ENCODE measurements at regions of chr10 and their contacts with region 1.

Region 1: DNA sequence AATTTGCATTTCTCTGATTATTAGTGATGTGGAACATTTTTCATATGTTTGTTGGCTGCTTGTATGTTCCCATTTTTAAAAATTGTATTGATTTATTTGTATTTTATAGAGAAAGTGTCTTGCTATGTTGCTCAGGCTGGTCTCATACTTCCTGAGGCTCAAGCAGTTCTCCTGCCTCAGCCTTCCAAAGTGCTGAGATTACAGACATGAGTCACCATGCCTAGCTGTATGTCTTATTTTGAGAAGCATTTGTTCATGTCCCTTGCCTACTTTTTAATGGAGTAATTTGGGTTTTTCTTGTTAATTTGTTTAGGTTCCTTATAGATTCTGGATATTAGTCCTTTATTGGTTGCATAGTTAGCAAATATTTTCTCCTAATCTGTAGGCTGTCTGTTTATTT is 214.2 kb upstream of the KAT6B start:
- DNase-seq: no peak

Region 2: GRCh38 chr10:73814896-73815718 is 797.1 kb before region 1 on chr10:
- intact Hi-C with region 1: no loop called
- DNase-seq: no peak

Region 3: GRCh38 chr10:74371696-74372095 is 240.5 kb before region 1 on chr10:
- intact Hi-C with region 1: no loop called
- DNase-seq: peak; percentile 41

Region 4: DNA sequence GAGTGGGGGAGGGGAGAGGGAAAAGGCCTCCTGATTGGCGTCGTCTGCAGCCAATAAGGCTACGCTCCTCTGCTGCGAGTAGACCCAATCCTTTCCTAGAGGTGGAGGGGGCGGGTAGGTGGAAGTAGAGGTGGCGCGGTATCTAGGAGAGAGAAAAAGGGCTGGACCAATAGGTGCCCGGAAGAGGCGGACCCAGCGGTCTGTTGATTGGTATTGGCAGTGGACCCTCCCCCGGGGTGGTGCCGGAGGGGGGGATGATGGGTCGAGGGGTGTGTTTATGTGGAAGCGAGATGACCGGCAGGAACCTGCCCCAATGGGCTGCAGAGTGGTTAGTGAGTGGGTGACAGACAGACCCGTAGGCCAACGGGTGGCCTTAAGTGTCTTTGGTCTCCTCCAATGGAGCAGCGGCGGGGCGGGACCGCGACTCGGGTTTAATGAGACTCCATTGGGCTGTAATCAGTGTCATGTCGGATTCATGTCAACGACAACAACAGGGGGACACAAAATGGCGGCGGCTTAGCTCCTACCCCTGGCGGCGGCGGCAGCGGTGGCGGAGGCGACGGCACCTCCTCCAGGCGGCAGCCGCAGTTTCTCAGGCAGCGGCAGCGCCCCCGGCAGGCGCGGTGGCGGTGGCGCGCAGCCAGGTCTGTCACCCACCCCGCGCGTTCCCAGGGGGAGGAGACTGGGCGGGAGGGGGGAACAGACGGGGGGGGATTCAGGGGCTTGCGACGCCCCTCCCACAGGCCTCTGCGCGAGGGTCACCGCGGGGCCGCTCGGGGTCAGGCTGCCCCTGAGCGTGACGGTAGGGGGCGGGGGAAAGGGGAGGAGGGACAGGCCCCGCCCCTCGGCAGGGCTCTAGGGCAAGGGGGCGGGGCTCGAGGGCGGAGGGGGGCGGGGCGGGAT is 214.2 kb after region 1 on chr10 and contains the start of gene KAT6B:
- intact Hi-C with region 1: no loop called
- DNase-seq: peak; percentile 100
- total RNA-seq, gene KAT6B: 34.7 to 35.0 TPM

Region 5: DNA sequence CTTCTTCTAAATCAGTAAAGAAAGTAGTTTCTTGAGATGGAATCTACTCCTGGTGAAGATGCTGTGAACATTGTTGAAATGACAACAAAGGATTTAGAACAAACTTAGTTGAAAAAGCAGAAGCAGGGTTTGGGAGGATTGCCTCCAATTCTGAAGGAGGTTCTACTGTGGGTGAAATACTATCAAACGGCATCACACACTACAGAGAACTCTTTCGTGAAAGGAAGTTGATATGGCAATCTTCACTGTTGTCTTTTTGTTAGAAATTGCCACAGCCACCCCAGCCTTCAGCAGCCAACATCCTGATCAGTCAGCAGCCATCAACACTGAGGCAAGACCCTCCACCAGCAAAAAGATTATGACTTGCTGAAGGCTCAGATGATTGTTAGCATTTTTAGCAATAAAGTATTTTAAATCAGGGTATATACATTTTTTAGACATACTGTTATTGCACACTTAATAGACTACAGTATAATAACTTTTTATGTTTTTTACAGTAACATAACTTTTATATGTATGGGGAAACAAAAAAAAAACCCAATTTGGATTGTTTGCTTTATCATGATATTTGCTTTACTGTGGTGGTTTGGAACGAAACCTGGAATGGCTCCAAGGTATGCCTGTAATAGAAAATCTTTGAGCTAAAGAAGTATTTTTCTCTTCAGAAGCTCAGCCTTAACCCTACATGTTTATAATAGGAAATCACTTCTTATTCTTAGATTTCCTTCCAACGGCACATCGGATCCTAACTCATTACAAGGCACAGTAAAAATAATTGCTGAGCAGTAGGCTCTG is 1076.5 kb after region 1 on chr10:
- intact Hi-C with region 1: loop called in 1 of 2 experiments (anchors 5 kb)
- DNase-seq: no peak

Region 6: GRCh38 chr10:76172020-76172419 is 1559.8 kb after region 1 on chr10:
- intact Hi-C with region 1: no loop called
- DNase-seq: no peak

Measured in posterior vena cava (tissue), 2 donors.